Activated CD4-positive, alpha-beta memory T cell treated with anti-CD3 and anti-CD28 coated beads for 36 hours (primary cell): ENCODE measurements at regions of chr12 and their contacts with region 1.

Region 1: GRCh38 chr12:6323340-6323994 is 13.0 kb downstream of the PLEKHG6 start:
- DNase-seq: peak; percentile 58
- H3K4me3 Mint-ChIP-seq: peak overlapping the region; percentile 63
- H3K27ac Mint-ChIP-seq: peak overlapping the region; percentile 88
- H3K4me1 Mint-ChIP-seq: peaks cover 34% of the 10 kb centered on the region
- H3K27me3 Mint-ChIP-seq: no peaks in the 10 kb centered on the region

Region 2: DNA sequence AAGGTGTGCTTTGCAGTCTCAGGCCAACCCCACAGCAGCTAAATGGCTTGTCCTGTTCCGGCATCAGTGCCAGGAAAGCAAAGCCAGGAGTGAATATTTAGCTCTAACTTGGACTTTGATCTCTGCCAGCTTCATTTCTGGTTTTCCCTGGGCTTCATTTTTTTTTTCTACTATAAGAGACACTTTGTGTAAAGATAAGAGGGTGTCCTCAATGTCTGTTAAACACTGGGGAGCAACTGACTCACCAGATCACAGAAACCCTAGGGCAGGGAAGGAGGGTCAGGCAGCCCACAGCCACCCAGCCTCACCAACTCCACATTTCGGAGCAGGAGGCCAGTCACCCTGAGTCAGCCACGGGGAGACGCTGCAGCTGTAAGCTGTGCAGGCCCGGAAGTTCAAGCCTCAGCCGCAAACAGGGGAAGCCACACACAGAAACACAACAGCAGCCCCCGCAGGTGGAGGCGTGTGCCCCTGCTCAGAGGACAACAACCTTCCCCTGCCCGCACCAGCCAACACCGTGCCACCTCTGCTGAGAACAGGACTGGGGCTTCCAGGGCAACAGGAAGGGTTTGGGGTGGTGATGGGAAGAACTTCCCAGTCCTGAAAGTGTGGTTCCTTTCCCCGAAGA is 12.1 kb after region 1 on chr12:
- CTCF ChIA-PET with region 1: interaction called, 26 read pairs
- POLR2A ChIA-PET with region 1: interaction called, 4 read pairs
- intact Hi-C with region 1: loop called (anchors 1 kb)
- DNase-seq: peak; percentile 94
- H3K4me3 Mint-ChIP-seq: no peak overlapping the region
- H3K27ac Mint-ChIP-seq: no peak overlapping the region
- H3K4me1 Mint-ChIP-seq: peaks cover 20% of the 10 kb centered on the region
- H3K27me3 Mint-ChIP-seq: no peaks in the 10 kb centered on the region

Region 3: DNA sequence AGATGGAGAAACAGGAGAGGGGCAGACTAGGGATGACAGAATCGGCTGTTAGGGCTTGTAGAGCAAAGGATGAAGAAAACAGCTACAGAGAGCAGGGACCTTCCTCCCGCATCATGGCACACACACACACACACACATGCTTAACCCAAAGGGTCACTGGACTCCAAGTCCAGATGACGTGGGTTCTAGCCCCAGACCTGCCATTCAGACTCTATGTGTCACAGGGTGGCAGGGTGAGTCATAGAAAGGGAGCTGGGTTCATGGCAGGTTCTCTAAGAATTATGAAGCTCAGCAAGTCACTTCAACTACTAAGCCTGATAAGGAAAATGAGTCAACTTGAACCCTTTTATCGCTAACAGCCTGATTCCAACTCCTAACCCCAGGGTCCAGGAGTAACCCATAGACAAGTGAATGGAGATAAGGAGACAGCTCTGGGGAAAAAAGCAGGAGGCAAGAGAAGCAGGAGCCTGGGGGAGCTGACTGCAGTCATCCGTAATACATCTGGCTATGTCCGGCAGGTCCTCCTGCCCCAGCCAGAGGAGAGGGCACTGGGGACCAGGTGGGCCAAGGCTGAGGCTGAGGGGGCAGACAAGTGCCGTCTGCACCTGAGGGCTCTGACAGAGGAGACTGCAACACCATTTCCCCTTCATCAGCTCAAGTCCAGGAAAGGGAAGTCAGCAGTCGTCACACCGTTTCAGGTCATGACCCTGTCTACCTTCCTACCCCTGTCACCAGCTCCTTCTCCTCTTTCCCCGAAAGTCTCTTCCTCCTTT is 22.0 kb after region 1 on chr12:
- CTCF ChIA-PET with region 1: interaction called, 14 read pairs
- POLR2A ChIA-PET with region 1: interaction called, 3 read pairs
- intact Hi-C with region 1: no loop called
- DNase-seq: peak; percentile 83
- H3K4me3 Mint-ChIP-seq: no peak overlapping the region
- H3K27ac Mint-ChIP-seq: peak overlapping the region; percentile 73
- H3K4me1 Mint-ChIP-seq: peaks cover 44% of the 10 kb centered on the region
- H3K27me3 Mint-ChIP-seq: no peaks in the 10 kb centered on the region

Region 4: DNA sequence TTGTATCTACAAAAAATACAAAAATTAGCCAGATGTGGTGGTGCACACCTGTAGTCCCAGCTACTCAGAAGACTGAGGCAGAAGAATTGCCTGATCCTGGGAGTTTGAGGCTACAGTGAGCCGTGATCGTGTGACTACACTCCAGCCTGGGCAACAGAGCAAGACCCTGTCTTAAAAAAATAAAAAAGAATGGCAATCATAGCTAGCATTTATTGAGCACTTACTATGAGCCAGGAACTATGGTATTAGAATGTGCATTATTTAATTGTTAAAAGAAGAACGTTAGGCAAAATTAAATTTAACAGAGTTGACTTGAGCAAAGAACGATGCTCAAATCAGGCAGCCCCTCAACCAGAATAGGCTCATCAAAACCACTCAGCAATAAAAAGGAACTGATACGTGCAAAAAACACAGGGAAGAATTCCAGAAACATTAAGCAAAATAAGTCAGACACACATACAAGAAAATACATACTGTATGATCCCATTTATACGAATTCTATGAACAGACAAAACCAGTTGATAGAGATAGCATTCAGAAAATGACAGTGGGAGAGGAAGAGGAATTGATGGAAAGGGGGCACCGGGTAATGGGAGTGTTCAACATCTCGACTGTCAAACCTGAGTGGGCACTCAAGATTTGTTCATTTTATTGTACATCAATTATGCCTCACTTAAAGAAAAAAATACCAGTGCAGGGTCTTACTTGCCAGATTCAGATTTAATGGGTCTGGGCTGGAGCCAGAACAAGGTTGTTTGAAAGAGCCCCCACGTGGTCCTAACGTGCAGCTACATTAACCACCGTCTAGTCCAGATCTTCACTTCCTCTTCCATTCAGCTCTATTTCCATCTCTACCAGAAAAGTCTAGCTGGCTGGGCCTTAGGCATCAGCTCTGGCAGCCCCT is 43.9 kb after region 1 on chr12:
- CTCF ChIA-PET with region 1: interaction called, 18 read pairs
- POLR2A ChIA-PET with region 1: interaction called, 5 read pairs
- intact Hi-C with region 1: loop called (anchors 1 kb)
- DNase-seq: peak; percentile 53
- H3K4me3 Mint-ChIP-seq: no peak overlapping the region
- H3K27ac Mint-ChIP-seq: peak overlapping the region; percentile 38
- H3K4me1 Mint-ChIP-seq: peaks cover 25% of the 10 kb centered on the region
- H3K27me3 Mint-ChIP-seq: no peaks in the 10 kb centered on the region